B cell (primary cell): ENCODE measurements at regions of chr20 and their contacts with region 1.

Region 1: DNA sequence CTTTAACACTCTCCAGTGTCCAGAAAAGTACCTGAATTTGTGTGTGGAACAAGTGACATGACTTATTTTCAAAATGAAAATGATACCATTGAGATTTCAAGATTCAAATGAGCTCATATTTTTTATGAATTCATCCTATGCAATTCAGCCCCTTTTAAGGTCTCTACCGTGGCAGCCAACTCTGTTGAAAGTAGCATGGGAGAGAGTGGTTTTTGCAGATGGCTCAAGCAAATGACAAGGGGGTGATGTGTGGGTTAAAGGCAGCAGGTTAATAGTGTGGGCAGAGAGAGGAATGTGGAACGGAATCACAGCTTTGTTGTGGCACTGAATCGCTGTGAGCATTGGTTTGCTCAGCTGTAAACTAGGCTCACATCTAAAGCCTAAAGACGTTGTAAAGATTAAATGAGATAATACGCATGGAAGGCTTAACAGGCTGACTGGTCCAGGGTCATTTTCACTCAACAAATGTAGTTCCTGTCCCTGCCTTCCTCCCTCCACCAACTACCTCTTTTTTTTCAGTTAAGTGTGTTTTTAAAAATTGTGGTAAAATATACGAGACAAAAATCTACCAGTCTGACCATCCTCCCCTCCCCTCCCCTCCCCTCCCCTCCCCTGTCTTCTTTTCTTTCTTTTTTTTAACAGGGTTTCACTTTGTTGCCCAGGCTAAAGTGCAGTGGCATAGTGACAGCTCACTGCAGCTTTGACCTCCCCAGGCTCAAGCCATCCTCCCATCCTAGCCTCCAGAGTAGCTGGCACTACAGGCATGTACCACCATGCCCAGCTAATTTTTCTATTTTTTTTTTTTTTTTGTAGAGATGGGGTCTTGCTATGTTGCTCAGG is 114.7 kb upstream of the ZNF217 start:
- DNase-seq: peak; percentile 46
- ATAC-seq: peak; percentile 35
- H3K4me3 ChIP-seq: peak overlapping the region in 2 of 5 experiments; percentile 28 to 38
- H3K4me3 Mint-ChIP-seq: peak overlapping the region; percentile 72
- H3K27ac ChIP-seq: peak overlapping the region; percentile 77 to 79
- H3K27ac Mint-ChIP-seq: peak overlapping the region; percentile 88
- H3K4me1 ChIP-seq: peaks cover 42 to 58% of the 10 kb centered on the region in 2 donors
- H3K4me1 Mint-ChIP-seq: peaks cover 43% of the 10 kb centered on the region
- H3K27me3 ChIP-seq: no peaks in the 10 kb centered on the region
- H3K27me3 Mint-ChIP-seq: no peaks in the 10 kb centered on the region
- CTCF ChIP-seq: no peak

Region 2: DNA sequence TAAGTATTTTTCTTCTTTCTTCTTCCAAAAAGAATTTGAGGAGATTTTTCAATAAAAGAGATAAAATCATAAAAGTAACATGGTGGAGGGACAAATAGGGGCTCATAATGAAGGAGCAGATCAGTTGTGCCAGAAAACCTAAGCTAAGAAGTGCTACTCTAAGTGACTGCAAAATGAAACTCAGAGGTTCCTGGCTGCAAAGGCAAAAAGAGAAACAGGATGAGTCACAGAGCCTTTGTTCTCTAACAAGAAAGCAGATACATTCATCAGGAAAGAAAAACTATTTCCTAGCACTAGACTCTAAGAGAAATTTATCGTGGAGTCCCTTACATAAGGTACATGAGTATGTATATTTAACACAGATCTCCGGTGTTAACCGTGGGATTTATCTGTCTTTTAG is 686.4 kb before region 1 on chr20:
- CTCF ChIA-PET with region 1: no interaction called
- POLR2A ChIA-PET with region 1: no interaction called
- intact Hi-C with region 1: no loop called
- DNase-seq: no peak
- ATAC-seq: no peak
- H3K4me3 ChIP-seq: no peak overlapping the region
- H3K4me3 Mint-ChIP-seq: no peak overlapping the region
- H3K27ac ChIP-seq: no peak overlapping the region
- H3K27ac Mint-ChIP-seq: no peak overlapping the region
- H3K4me1 ChIP-seq: no peaks in the 10 kb centered on the region
- H3K4me1 Mint-ChIP-seq: peaks cover 2% of the 10 kb centered on the region
- H3K27me3 ChIP-seq: no peaks in the 10 kb centered on the region
- H3K27me3 Mint-ChIP-seq: peaks cover 4% of the 10 kb centered on the region
- CTCF ChIP-seq: no peak

Region 3: GRCh38 chr20:53692413-53693067 is 15.8 kb before region 1 on chr20:
- CTCF ChIA-PET with region 1: interaction called, 3 read pairs
- POLR2A ChIA-PET with region 1: no interaction called
- intact Hi-C with region 1: loop called (anchors 2 kb)
- DNase-seq: no peak
- ATAC-seq: no peak
- H3K4me3 ChIP-seq: no peak overlapping the region
- H3K4me3 Mint-ChIP-seq: peak overlapping the region; percentile 62
- H3K27ac ChIP-seq: no peak overlapping the region
- H3K27ac Mint-ChIP-seq: peak overlapping the region; percentile 72
- H3K4me1 ChIP-seq: peaks cover 12 to 13% of the 10 kb centered on the region in 2 donors
- H3K4me1 Mint-ChIP-seq: peaks cover 21% of the 10 kb centered on the region
- H3K27me3 ChIP-seq: no peaks in the 10 kb centered on the region
- H3K27me3 Mint-ChIP-seq: no peaks in the 10 kb centered on the region
- CTCF ChIP-seq: no peak

Region 4: DNA sequence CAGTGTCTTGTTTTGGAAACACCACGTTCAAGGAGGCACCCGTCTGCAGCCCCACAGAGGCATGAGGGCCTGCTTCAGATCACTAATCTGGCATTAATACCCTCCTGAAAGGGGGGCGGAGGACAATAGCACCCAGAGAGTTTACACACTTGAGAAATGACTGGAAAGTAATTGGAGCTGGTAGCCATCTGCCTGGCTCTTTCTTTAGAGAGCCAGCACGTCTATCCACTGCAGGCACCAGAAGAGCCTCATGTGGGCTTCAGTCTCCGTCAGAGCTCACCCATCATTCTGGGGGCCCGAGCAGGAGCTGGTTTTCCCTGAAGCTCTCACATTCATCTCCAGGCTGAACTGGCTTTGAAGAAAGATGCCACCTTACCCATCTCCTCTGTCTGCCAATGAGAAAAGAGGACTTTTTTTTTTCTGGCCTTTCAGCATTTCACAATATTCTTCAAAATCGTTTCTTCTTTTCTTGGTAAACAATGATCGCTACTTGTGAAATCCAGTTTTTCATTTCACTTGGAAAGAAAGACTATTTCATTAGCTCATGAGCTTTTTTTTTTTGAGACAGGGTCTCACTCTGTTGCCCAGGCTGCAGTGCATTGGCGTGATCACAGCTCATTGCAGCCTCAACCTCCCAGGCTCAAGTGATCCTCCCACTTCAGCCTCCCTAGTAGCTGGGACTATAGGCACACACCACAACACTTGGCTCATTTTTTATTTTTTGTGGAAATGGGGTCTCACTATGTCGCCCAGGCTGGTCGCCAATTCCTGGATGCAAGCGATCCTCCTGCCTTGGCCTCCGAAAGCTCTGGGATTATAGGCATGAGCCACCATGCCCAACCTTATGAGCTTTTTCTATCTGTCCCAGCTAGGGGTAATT is 10.0 kb after region 1 on chr20:
- CTCF ChIA-PET with region 1: no interaction called
- POLR2A ChIA-PET with region 1: no interaction called
- intact Hi-C with region 1: loop called (anchors 2 kb)
- DNase-seq: no peak
- ATAC-seq: no peak
- H3K4me3 ChIP-seq: no peak overlapping the region
- H3K4me3 Mint-ChIP-seq: no peak overlapping the region
- H3K27ac ChIP-seq: no peak overlapping the region
- H3K27ac Mint-ChIP-seq: no peak overlapping the region
- H3K4me1 ChIP-seq: peaks cover 22 to 38% of the 10 kb centered on the region in 2 donors
- H3K4me1 Mint-ChIP-seq: peaks cover 29% of the 10 kb centered on the region
- H3K27me3 ChIP-seq: no peaks in the 10 kb centered on the region
- H3K27me3 Mint-ChIP-seq: no peaks in the 10 kb centered on the region
- CTCF ChIP-seq: no peak

Region 5: GRCh38 chr20:54382422-54382821 is 674.1 kb after region 1 on chr20:
- CTCF ChIA-PET with region 1: no interaction called
- POLR2A ChIA-PET with region 1: no interaction called
- intact Hi-C with region 1: no loop called
- DNase-seq: no peak
- ATAC-seq: no peak
- H3K4me3 ChIP-seq: no peak overlapping the region
- H3K4me3 Mint-ChIP-seq: no peak overlapping the region
- H3K27ac ChIP-seq: no peak overlapping the region
- H3K27ac Mint-ChIP-seq: no peak overlapping the region
- H3K4me1 ChIP-seq: no peaks in the 10 kb centered on the region
- H3K4me1 Mint-ChIP-seq: no peaks in the 10 kb centered on the region
- H3K27me3 ChIP-seq: no peaks in the 10 kb centered on the region
- H3K27me3 Mint-ChIP-seq: peaks cover 25% of the 10 kb centered on the region
- CTCF ChIP-seq: no peak